ENCODE measurements at regions of chr2 and their contacts with region 1.

Region 1: GRCh38 chr2:174835797-174836255 is 71.6 kb upstream of the CHRNA1 start:
- DNase-seq: peak; percentile 60
- H3K4me3 Mint-ChIP-seq: peak overlapping the region; percentile 72
- H3K27ac Mint-ChIP-seq: peak overlapping the region; percentile 99
- H3K4me1 Mint-ChIP-seq: peaks cover 30% of the 10 kb centered on the region
- H3K27me3 Mint-ChIP-seq: no peaks in the 10 kb centered on the region

Region 2: GRCh38 chr2:174300089-174300488 is 535.7 kb before region 1 on chr2:
- intact Hi-C with region 1: no loop called
- DNase-seq: no peak
- H3K4me3 Mint-ChIP-seq: no peak overlapping the region
- H3K27ac Mint-ChIP-seq: no peak overlapping the region
- H3K4me1 Mint-ChIP-seq: no peaks in the 10 kb centered on the region
- H3K27me3 Mint-ChIP-seq: peaks cover 22% of the 10 kb centered on the region

Region 3: DNA sequence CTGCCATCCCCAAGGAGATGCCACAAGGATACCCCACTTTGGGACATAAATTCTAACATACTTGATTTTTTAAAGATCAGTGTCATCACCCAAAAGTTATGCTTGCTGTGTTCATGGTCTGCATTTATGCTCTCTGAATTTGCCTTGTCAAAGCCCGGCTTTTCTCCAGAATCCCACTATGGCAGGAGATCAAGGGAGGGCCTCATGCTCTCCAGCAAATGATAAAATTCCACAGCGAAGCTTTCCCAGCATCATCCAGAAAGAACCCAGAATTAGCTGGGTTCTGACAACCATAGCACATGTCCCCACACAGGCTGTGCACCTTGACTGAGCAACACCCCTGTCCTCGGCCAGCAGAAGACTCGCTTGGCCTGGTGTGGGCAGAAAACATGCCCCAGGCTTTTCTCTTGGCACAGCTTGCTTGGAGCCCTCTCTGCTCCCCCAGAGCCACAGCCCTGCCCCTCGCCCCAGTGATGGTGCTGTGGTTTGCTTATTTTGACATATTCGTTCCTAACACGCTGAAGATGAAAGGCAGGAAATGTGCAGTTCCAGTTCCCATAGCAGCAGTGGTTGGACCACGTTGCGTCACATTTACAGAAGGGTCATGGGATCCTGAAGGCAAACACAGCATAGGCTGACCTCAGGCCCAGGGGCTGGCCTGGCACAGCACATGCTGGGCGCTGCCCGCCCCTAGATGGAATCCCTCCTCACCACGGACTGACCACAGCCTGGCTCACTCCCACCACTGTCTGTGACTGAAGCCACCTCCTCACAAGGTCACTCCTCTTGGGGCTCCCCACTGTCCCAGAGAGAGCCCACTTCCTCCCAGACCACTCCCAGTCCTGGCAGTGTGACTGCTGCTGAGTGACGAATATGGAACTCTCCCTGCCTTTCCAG is 57.5 kb before region 1 on chr2:
- intact Hi-C with region 1: loop called (anchors 2 kb)
- DNase-seq: peak; percentile 95
- H3K4me3 Mint-ChIP-seq: peak overlapping the region; percentile 70
- H3K27ac Mint-ChIP-seq: peak overlapping the region; percentile 95
- H3K4me1 Mint-ChIP-seq: peaks cover 47% of the 10 kb centered on the region
- H3K27me3 Mint-ChIP-seq: no peaks in the 10 kb centered on the region

Region 4: GRCh38 chr2:174797781-174798276 is 38.0 kb before region 1 on chr2:
- intact Hi-C with region 1: loop called (anchors 1 kb)
- DNase-seq: no peak
- H3K4me3 Mint-ChIP-seq: no peak overlapping the region
- H3K27ac Mint-ChIP-seq: no peak overlapping the region
- H3K4me1 Mint-ChIP-seq: peaks cover 19% of the 10 kb centered on the region
- H3K27me3 Mint-ChIP-seq: no peaks in the 10 kb centered on the region

Region 5: DNA sequence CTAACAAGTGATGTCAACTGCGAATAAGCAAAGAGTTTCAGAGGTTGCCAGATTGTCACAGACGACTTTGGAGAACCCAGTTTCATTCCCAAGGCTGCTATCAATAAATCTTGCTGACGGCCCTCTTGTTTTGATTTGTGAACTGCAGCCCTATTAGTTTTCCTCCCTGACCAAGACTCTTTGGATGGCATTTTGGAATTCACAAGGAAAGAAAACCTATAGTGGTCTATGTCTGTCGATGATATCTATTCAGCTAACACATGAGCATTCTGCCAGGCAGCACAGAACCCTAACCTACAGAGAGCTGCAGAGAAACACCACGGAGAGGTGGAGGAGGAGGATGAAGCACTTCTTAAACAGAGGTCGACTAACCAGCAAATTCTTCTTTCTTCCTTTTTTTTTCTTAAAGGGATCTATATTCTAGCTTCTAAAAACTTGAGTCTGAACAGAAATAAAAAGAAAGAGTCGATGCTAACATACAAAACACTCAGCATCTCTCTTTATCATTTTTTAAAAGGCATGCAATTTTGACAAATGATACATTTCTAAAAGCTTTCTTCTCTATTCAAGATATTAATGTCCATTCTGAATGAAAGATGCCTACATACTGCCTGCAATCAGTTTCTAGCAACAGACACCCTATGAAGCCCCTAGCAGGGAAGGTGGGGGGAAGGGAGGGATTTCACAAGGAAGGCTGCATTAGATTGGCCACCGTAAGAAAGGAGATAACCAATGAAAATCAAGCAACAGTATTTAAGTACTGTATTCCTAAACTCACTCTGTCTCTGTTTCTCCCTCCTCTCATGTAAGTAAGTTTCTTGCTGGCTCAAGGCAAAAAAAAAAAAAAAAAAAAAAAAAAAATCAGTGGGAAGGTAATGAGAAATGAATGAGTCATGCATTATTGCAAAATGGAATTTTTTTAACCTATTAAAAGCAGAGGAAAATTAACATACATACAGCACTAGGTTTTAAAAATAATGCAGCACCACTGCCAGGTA is 11.4 kb after region 1 on chr2:
- intact Hi-C with region 1: loop called (anchors 1 kb)
- DNase-seq: no peak
- H3K4me3 Mint-ChIP-seq: peak overlapping the region; percentile 45
- H3K27ac Mint-ChIP-seq: no peak overlapping the region
- H3K4me1 Mint-ChIP-seq: peaks cover 14% of the 10 kb centered on the region
- H3K27me3 Mint-ChIP-seq: peaks cover 2% of the 10 kb centered on the region

Region 6: GRCh38 chr2:174888646-174889271 is 52.9 kb after region 1 on chr2:
- intact Hi-C with region 1: loop called (anchors 2 kb)
- DNase-seq: no peak
- H3K4me3 Mint-ChIP-seq: no peak overlapping the region
- H3K27ac Mint-ChIP-seq: no peak overlapping the region
- H3K4me1 Mint-ChIP-seq: peaks cover 7% of the 10 kb centered on the region
- H3K27me3 Mint-ChIP-seq: peaks cover 3% of the 10 kb centered on the region

Measured in activated CD4-positive, alpha-beta T cell treated with anti-CD3 and anti-CD28 coated beads, Interleukin-2, amount 10 ng/mL, durations not matched to agents 24 days and 14 days (primary cell).